CD8-positive, alpha-beta T cell (primary cell): ENCODE measurements at regions of chr5 and their contacts with region 1.

Region 1: DNA sequence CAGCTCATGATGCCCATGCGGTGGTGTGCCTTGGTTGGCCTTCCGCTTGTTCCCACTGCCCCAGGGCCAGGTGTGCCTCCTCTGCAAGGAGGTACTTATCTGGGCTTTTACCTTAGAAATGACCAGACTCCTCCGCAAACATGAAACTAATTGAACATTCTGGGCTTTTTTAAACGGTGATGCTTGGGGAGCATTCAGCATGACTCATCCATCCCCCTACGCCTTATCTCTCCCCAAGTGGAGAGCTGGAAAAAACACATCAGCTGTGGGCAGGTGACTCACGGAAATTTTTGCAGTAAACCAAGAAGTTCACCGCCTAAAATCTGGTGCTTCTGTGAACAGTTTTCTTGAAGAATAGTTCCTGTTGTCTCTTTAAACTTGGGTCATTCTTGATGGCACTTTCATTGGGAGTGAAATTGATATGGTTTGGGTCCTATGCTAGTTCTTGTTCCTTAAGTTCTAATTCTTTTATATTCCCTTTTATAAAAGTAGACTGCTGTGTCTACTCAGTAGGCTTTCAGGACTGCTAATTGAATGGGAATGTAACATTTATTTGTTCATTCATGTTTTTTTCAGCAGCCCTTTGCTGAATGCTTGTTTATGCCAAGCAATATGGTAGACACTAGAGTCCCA is 39.6 kb downstream of the SFXN1 start:
- DNase-seq: peak in 8 of 9 experiments; percentile 32 to 70 (median 51)
- ATAC-seq: peak; percentile 13
- H3K4me3 ChIP-seq: no peak overlapping the region
- H3K4me3 Mint-ChIP-seq: peak overlapping the region; percentile 35
- H3K27ac ChIP-seq: peak overlapping the region in 1 of 2 experiments; percentile 5
- H3K27ac Mint-ChIP-seq: peak overlapping the region; percentile 87
- H3K4me1 ChIP-seq: peaks cover 66% of the 10 kb centered on the region
- H3K4me1 Mint-ChIP-seq: peaks cover 75% of the 10 kb centered on the region
- H3K27me3 ChIP-seq: no peaks in the 10 kb centered on the region
- H3K27me3 Mint-ChIP-seq: no peaks in the 10 kb centered on the region
- CTCF ChIP-seq: no peak

Region 2: DNA sequence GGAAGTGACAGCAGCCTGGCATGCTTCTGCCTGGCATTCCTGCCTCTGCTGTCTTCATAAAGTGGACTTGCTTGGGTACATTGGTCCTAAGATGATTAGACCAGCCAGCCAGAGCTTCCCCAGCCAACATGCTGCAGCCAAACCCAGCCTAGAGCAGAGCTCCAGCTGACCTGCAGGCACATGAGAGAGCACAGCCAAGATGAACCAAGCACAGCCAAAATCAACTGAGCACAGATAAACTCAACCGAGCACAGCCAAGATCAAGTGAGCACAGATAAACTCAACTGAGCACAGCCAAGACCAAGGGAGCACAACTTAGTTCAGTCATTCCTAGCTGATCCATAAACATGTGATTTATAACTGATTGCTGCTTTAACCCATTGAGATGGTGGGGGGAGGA is 527.0 kb before region 1 on chr5:
- CTCF ChIA-PET with region 1: no interaction called
- POLR2A ChIA-PET with region 1: no interaction called
- intact Hi-C with region 1: no loop called
- DNase-seq: no peak
- ATAC-seq: no peak
- H3K4me3 ChIP-seq: no peak overlapping the region
- H3K4me3 Mint-ChIP-seq: no peak overlapping the region
- H3K27ac ChIP-seq: no peak overlapping the region
- H3K27ac Mint-ChIP-seq: no peak overlapping the region
- H3K4me1 ChIP-seq: no peaks in the 10 kb centered on the region
- H3K4me1 Mint-ChIP-seq: no peaks in the 10 kb centered on the region
- H3K27me3 ChIP-seq: no peaks in the 10 kb centered on the region
- H3K27me3 Mint-ChIP-seq: peaks cover 5% of the 10 kb centered on the region
- CTCF ChIP-seq: no peak

Region 3: GRCh38 chr5:175478384-175479124 is 39.4 kb before region 1 on chr5 and contains the start of gene SFXN1:
- CTCF ChIA-PET with region 1: interaction called, 4 read pairs
- POLR2A ChIA-PET with region 1: interaction called, 12 read pairs
- intact Hi-C with region 1: loop called (anchors 2 kb)
- DNase-seq: peak; percentile 43 to 89 (median 75)
- ATAC-seq: peak; percentile 32
- H3K4me3 ChIP-seq: peak within 1 kb of the TSS; percentile 74 to 80
- H3K4me3 Mint-ChIP-seq: peak within 1 kb of the TSS; percentile 96
- H3K27ac ChIP-seq: peak within 1 kb of the TSS; percentile 67 to 75
- H3K27ac Mint-ChIP-seq: peak within 1 kb of the TSS; percentile 97
- H3K4me1 ChIP-seq: peaks cover 48% of the 10 kb centered on the region
- H3K4me1 Mint-ChIP-seq: peaks cover 49% of the 10 kb centered on the region
- H3K27me3 ChIP-seq: no peaks in the 10 kb centered on the region
- H3K27me3 Mint-ChIP-seq: no peaks in the 10 kb centered on the region
- CTCF ChIP-seq: no peak
- total RNA-seq, gene SFXN1: 169 to 174 TPM

Region 4: GRCh38 chr5:175501759-175502339 is 16.1 kb before region 1 on chr5:
- CTCF ChIA-PET with region 1: no interaction called
- POLR2A ChIA-PET with region 1: interaction called, 3 read pairs
- intact Hi-C with region 1: loop called in 1 of 2 experiments (anchors 2 kb)
- DNase-seq: peak in 1 of 9 experiments; percentile 23
- ATAC-seq: no peak
- H3K4me3 ChIP-seq: no peak overlapping the region
- H3K4me3 Mint-ChIP-seq: no peak overlapping the region
- H3K27ac ChIP-seq: no peak overlapping the region
- H3K27ac Mint-ChIP-seq: peak overlapping the region; percentile 64
- H3K4me1 ChIP-seq: peaks cover 2% of the 10 kb centered on the region
- H3K4me1 Mint-ChIP-seq: peaks cover 39% of the 10 kb centered on the region
- H3K27me3 ChIP-seq: no peaks in the 10 kb centered on the region
- H3K27me3 Mint-ChIP-seq: no peaks in the 10 kb centered on the region
- CTCF ChIP-seq: no peak

Region 5: DNA sequence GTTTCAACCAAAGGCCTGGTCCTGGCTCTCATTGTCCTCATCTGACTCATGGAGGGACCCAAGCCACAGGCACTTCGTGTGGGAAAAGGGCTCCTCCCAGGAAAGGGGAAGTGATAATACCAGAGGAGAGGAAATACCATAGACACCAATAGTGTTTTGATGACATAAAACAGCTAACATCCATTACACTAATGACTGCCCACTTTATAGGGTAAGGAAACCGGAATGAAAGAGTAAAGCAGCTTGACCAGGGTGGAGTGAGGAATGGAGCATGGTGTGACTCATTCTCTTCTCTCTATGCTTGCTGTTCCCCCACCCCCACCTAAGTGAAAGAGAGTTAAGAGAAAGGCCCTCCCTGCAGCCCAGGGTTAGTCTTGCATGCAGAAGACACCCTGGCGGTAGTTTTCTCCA is 72.5 kb after region 1 on chr5:
- CTCF ChIA-PET with region 1: no interaction called
- POLR2A ChIA-PET with region 1: no interaction called
- intact Hi-C with region 1: no loop called
- DNase-seq: peak in 1 of 9 experiments; percentile 7
- ATAC-seq: no peak
- H3K4me3 ChIP-seq: no peak overlapping the region
- H3K4me3 Mint-ChIP-seq: no peak overlapping the region
- H3K27ac ChIP-seq: no peak overlapping the region
- H3K27ac Mint-ChIP-seq: no peak overlapping the region
- H3K4me1 ChIP-seq: no peaks in the 10 kb centered on the region
- H3K4me1 Mint-ChIP-seq: no peaks in the 10 kb centered on the region
- H3K27me3 ChIP-seq: no peaks in the 10 kb centered on the region
- H3K27me3 Mint-ChIP-seq: peaks cover 3% of the 10 kb centered on the region
- CTCF ChIP-seq: no peak

Region 6: DNA sequence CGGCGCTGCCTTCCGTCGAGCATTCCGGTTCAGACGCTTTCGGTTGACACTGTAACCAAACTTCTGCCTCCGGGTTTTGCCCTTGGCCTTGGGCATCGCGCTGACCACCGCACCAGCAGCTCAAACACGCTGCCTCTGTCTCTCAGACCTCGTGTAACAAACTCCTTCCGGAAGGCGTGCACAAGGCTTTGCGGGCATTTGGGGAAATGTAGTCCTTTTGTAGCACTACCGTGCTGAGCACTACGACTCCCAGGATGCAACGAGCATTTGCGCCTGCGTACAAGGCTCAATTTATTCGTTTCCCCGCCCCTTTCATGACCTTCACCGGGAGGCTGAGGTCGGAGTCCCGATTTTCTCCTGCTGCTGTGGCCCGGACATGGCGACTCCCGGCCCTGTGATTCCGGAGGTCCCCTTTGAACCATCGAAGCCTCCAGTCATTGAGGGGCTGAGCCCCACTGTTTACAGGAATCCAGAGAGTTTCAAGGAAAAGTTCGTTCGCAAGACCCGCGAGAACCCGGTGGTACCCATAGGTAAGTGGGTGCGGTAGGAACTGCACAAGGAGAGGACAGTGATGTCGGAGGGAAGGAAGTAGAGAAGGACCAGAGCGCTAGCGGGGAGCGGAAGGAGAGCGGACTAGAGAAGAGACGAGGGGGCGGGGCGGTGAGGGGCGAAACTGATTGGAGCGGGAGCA is 870.7 kb after region 1 on chr5 and contains the starts of genes HIGD2A and NOP16:
- CTCF ChIA-PET with region 1: no interaction called
- POLR2A ChIA-PET with region 1: no interaction called
- intact Hi-C with region 1: loop called in 1 of 2 experiments (anchors 5 kb)
- DNase-seq: peak; percentile 97 to 100 (median 99)
- ATAC-seq: peak; percentile 90
- H3K4me3 ChIP-seq: peak within 1 kb of the TSS; percentile 87 to 89
- H3K4me3 Mint-ChIP-seq: peak within 1 kb of the TSS; percentile 99
- H3K27ac ChIP-seq: peak within 1 kb of the TSS; percentile 90 to 93
- H3K27ac Mint-ChIP-seq: peak within 1 kb of the TSS; percentile 99
- H3K4me1 ChIP-seq: peaks cover 22% of the 10 kb centered on the region
- H3K4me1 Mint-ChIP-seq: peaks cover 36% of the 10 kb centered on the region
- H3K27me3 ChIP-seq: no peaks in the 10 kb centered on the region
- H3K27me3 Mint-ChIP-seq: no peaks in the 10 kb centered on the region
- CTCF ChIP-seq: no peak
- total RNA-seq, gene HIGD2A: 102 to 106 TPM
- total RNA-seq, gene NOP16: 21.6 to 24.2 TPM